ENCODE measurements at regions of chr18 and their contacts with region 1.

Region 1: GRCh38 chr18:52694804-52695203 is 354.8 kb downstream of the DCC start:
- DNase-seq: no peak
- ATAC-seq: no peak
- H3K4me3 ChIP-seq: no peak overlapping the region
- H3K4me3 Mint-ChIP-seq: no peak overlapping the region
- H3K27ac ChIP-seq: no peak overlapping the region
- H3K27ac Mint-ChIP-seq: no peak overlapping the region
- H3K4me1 ChIP-seq: no peaks in the 10 kb centered on the region
- H3K4me1 Mint-ChIP-seq: no peaks in the 10 kb centered on the region
- H3K27me3 ChIP-seq: no peaks in the 10 kb centered on the region
- H3K27me3 Mint-ChIP-seq: no peaks in the 10 kb centered on the region
- CTCF ChIP-seq: no peak

Region 2: DNA sequence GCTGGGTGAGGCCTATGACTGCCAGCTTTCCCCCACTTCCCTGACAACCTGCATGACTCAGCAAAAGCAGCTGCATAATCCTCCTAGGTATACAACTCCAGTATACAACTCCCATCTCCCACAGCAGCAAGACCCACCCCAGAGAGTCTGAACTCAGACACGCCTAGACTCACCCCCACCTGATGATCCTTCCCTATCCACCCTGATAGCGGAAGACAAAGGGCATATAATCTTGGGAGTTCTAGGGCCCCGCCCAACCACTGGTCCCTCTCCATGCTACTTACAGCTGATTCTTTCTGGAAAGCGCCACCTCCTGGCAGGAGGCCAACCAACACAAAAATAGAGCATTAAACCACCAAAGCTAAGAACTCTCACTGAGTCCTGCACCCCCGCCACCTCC is 58.3 kb before region 1 on chr18:
- CTCF ChIA-PET with region 1: no interaction called
- POLR2A ChIA-PET with region 1: no interaction called
- intact Hi-C with region 1: loop called in 1 of 2 experiments (anchors 10 kb)
- DNase-seq: no peak
- ATAC-seq: no peak
- H3K4me3 ChIP-seq: no peak overlapping the region
- H3K4me3 Mint-ChIP-seq: no peak overlapping the region
- H3K27ac ChIP-seq: no peak overlapping the region
- H3K27ac Mint-ChIP-seq: no peak overlapping the region
- H3K4me1 ChIP-seq: no peaks in the 10 kb centered on the region
- H3K4me1 Mint-ChIP-seq: no peaks in the 10 kb centered on the region
- H3K27me3 ChIP-seq: no peaks in the 10 kb centered on the region
- H3K27me3 Mint-ChIP-seq: no peaks in the 10 kb centered on the region
- CTCF ChIP-seq: no peak

Region 3: GRCh38 chr18:52682260-52682659 is 12.5 kb before region 1 on chr18:
- CTCF ChIA-PET with region 1: no interaction called
- POLR2A ChIA-PET with region 1: no interaction called
- intact Hi-C with region 1: no loop called
- DNase-seq: no peak
- ATAC-seq: no peak
- H3K4me3 ChIP-seq: no peak overlapping the region
- H3K4me3 Mint-ChIP-seq: no peak overlapping the region
- H3K27ac ChIP-seq: no peak overlapping the region
- H3K27ac Mint-ChIP-seq: no peak overlapping the region
- H3K4me1 ChIP-seq: no peaks in the 10 kb centered on the region
- H3K4me1 Mint-ChIP-seq: no peaks in the 10 kb centered on the region
- H3K27me3 ChIP-seq: no peaks in the 10 kb centered on the region
- H3K27me3 Mint-ChIP-seq: no peaks in the 10 kb centered on the region
- CTCF ChIP-seq: no peak